ENCODE measurements at regions of chr6 and their contacts with region 1.

Region 1: GRCh38 chr6:52598123-52598823 is 21.4 kb upstream of the TRAM2 start:
- DNase-seq: peak; percentile 62 to 75
- ATAC-seq: peak; percentile 77 to 92 (median 82)
- H3K4me3 ChIP-seq: peak overlapping the region; percentile 51
- H3K27ac ChIP-seq: no peak overlapping the region
- H3K4me1 ChIP-seq: peaks cover 9% of the 10 kb centered on the region
- H3K27me3 ChIP-seq: no peaks in the 10 kb centered on the region
- CTCF ChIP-seq: peak; percentile 66

Region 2: DNA sequence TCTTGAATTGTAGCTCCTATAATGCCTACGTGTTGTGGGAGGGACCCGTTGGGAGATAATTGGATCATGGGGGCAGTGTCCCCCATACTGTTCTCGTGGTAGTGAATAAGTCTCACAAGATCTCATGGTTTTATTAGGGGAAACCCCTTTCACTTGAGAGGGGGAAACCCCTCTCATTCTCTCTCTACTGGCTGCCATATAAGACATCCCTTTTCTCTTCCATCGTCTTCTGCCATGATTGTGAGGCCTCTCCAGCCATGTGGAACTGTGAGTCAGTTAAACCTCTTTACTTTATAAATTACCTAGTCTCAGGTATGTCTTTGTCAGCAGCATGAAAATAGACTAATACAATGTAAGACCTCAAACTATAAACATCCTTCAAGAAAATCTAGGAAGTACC is 213.2 kb before region 1 on chr6:
- intact Hi-C with region 1: no loop called
- DNase-seq: no peak
- ATAC-seq: no peak
- H3K4me3 ChIP-seq: no peak overlapping the region
- H3K27ac ChIP-seq: no peak overlapping the region
- H3K4me1 ChIP-seq: no peaks in the 10 kb centered on the region
- H3K27me3 ChIP-seq: peaks cover 0 to 1% (median 0%) of the 10 kb centered on the region in 3 donors
- CTCF ChIP-seq: no peak

Region 3: DNA sequence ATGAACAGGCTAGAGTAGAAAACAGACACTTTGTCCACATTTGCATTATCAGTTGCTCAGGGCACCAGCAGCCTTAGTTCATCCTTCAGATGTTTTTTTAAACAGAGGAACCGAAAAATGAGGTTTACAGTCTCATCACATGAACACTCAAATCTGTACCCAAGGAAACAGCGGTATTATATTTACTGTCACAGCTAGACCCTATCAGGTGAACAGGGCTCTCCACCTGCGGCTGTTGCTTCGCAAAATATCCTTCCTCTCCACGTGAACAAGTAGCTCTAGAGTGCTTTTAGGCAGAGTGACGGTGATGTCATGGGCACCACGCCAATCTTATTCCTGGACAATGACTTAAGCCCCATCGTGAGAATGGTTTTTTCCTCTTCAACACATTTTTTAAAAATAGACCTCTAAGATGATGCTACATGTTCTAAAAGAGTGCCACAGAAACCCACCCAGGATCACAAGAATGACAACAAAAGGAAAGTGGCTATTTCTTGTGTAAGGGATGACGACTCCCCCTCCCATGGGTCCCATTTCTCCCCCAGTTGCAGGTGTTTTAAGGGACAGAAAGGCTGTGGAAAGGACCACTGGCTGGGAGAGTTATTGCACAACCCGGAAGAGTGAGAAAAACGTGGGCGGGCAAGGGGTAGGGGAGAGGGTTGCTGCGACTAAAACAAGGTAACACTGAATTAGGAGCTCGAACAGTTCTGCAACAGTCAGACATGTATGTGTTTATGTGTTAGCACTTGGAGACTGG is 100.4 kb before region 1 on chr6:
- intact Hi-C with region 1: loop called (anchors 5 kb)
- DNase-seq: peak in 1 of 2 donors; percentile 50
- ATAC-seq: no peak
- H3K4me3 ChIP-seq: no peak overlapping the region
- H3K27ac ChIP-seq: no peak overlapping the region
- H3K4me1 ChIP-seq: peaks cover 25% of the 10 kb centered on the region
- H3K27me3 ChIP-seq: no peaks in the 10 kb centered on the region
- CTCF ChIP-seq: no peak

Region 4: GRCh38 chr6:52664186-52664990 is 66.1 kb after region 1 on chr6:
- intact Hi-C with region 1: loop called in 1 of 2 experiments (anchors 5 kb)
- DNase-seq: peak; percentile 79 to 87
- ATAC-seq: peak; percentile 89 to 99 (median 98)
- H3K4me3 ChIP-seq: peak overlapping the region; percentile 84
- H3K27ac ChIP-seq: peak overlapping the region; percentile 53
- H3K4me1 ChIP-seq: no peaks in the 10 kb centered on the region
- H3K27me3 ChIP-seq: peaks cover 0 to 5% (median 0%) of the 10 kb centered on the region in 3 donors
- CTCF ChIP-seq: no peak